ENCODE measurements at regions of chr12 and their contacts with region 1.

Region 1: DNA sequence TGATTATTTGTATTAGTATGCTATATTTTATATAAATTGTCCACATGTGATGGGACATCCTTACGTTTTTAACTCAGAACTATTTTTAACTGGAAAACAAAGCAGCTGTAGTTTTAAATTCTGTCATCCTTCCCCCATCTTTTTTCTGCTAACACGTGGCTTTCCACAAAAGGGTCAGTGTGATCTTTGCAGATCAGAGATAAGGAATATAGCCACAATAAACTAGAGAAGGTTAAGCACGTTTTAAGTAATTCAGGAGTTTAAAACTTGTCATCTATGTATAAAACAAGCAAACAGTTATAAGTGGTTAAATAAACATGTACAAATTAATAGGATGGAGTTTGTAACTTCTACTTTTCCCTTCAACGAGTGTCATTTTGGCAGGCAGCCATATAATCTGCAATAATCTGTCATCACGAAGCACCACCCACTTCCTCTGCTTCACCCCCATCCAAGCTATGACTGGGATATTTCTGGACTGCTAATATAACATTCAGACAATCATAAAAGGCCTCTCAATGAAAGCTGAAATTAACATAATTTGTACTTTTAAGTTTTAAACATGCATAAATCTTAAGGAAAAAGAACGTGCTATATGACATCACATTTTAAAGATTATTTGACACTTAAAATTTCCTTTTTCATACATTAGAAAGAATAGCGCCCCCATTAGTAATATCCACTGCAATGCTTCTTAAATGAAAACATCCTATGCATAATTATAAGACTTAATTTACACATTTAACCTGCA is 15.3 kb downstream of the TAOK3 start:
- DNase-seq: peak; percentile 76
- ATAC-seq: peak; percentile 50
- H3K4me3 ChIP-seq: peak overlapping the region in 4 of 5 experiments; percentile 15 to 92 (median 48)
- H3K4me3 Mint-ChIP-seq: peak overlapping the region; percentile 93
- H3K27ac ChIP-seq: peak overlapping the region; percentile 43 to 87
- H3K27ac Mint-ChIP-seq: peak overlapping the region; percentile 69
- H3K4me1 ChIP-seq: peaks cover 23 to 38% of the 10 kb centered on the region in 2 donors
- H3K4me1 Mint-ChIP-seq: peaks cover 42% of the 10 kb centered on the region
- H3K27me3 ChIP-seq: no peaks in the 10 kb centered on the region
- H3K27me3 Mint-ChIP-seq: no peaks in the 10 kb centered on the region
- CTCF ChIP-seq: peak; percentile 33

Region 2: DNA sequence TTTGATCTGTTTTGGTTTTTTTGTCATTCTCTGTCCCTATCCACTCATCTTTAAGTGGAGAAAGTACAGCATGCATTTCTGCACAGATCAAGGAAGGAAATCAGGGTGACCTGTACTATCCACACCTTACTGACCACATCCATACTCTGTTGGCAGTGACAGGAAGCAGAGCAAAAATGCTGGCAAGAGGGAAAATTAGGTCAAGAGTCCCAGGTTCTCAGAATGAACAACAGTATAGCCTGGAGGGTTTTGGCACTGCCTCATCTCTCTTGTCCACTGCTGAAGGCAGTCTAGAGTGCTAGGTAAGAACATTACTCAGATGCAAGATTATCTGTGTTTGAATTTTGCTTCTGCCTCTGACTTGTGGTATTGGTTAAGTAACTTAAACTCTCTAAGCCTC is 55.4 kb before region 1 on chr12:
- CTCF ChIA-PET with region 1: interaction called, 4 read pairs
- POLR2A ChIA-PET with region 1: interaction called, 3 read pairs
- intact Hi-C with region 1: loop called (anchors 5 kb)
- DNase-seq: no peak
- ATAC-seq: no peak
- H3K4me3 ChIP-seq: no peak overlapping the region
- H3K4me3 Mint-ChIP-seq: no peak overlapping the region
- H3K27ac ChIP-seq: no peak overlapping the region
- H3K27ac Mint-ChIP-seq: no peak overlapping the region
- H3K4me1 ChIP-seq: peaks cover 14 to 15% of the 10 kb centered on the region in 2 donors
- H3K4me1 Mint-ChIP-seq: peaks cover 39% of the 10 kb centered on the region
- H3K27me3 ChIP-seq: no peaks in the 10 kb centered on the region
- H3K27me3 Mint-ChIP-seq: no peaks in the 10 kb centered on the region
- CTCF ChIP-seq: no peak

Region 3: DNA sequence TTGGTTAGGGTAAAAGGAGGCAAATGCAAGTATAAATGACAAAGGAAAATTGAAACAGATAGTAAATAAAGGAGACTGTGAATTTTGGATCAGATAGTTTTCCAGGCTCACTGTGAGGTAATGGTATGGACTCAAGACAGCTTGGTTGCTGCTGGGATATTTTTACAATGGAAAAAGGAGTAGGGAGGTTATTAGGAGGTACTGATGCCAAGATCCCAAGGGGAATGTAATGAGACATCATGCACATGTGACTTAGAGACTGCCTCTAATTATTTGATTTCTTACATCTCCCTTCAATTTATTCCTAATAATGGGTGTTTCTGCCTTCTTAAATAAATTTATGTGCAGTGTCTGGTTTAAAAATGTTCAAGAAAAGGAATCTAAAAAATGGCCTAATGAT is 41.6 kb before region 1 on chr12:
- CTCF ChIA-PET with region 1: interaction called, 3 read pairs
- POLR2A ChIA-PET with region 1: no interaction called
- intact Hi-C with region 1: loop called (anchors 5 kb)
- DNase-seq: no peak
- ATAC-seq: no peak
- H3K4me3 ChIP-seq: no peak overlapping the region
- H3K4me3 Mint-ChIP-seq: no peak overlapping the region
- H3K27ac ChIP-seq: no peak overlapping the region
- H3K27ac Mint-ChIP-seq: no peak overlapping the region
- H3K4me1 ChIP-seq: peaks cover 5 to 17% of the 10 kb centered on the region in 2 donors
- H3K4me1 Mint-ChIP-seq: peaks cover 35% of the 10 kb centered on the region
- H3K27me3 ChIP-seq: no peaks in the 10 kb centered on the region
- H3K27me3 Mint-ChIP-seq: no peaks in the 10 kb centered on the region
- CTCF ChIP-seq: no peak

Region 4: DNA sequence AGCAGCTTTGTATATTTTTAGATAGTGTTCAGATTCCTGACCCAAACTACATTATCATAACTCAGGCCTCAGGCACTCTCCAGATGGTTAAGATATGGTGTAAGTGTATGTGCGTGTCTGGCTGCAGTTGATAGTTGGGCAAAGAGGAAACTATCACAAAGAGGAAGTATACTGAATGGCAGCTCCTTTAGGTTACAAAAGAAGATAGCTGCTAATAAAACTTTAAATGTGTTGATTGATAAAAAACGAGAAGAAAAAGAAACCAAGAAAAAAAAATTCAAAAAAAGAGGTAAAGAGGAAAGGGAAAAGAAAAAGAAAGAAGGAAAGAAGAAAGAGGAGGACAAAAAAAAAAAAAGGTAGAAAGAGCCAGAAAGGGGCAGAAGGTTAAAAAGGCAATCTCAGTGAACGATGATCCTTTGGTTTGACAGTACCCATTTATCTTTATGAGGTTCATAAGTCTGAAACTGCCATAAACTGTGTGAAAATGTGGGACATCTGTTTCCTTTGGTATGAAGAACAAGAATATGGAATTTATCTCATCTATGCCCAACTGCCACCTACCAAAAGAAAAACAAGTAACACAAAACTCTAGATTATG is 26.9 kb before region 1 on chr12:
- CTCF ChIA-PET with region 1: interaction called, 3 read pairs
- POLR2A ChIA-PET with region 1: interaction called, 15 read pairs
- intact Hi-C with region 1: no loop called
- DNase-seq: peak; percentile 70
- ATAC-seq: peak; percentile 91
- H3K4me3 ChIP-seq: peak overlapping the region in 1 of 5 experiments; percentile 33
- H3K4me3 Mint-ChIP-seq: peak overlapping the region; percentile 42
- H3K27ac ChIP-seq: peak overlapping the region; percentile 7 to 83
- H3K27ac Mint-ChIP-seq: peak overlapping the region; percentile 80
- H3K4me1 ChIP-seq: peaks cover 21 to 41% of the 10 kb centered on the region in 2 donors
- H3K4me1 Mint-ChIP-seq: peaks cover 54% of the 10 kb centered on the region
- H3K27me3 ChIP-seq: no peaks in the 10 kb centered on the region
- H3K27me3 Mint-ChIP-seq: no peaks in the 10 kb centered on the region
- CTCF ChIP-seq: no peak

Region 5: GRCh38 chr12:118346895-118347294 is 10.5 kb before region 1 on chr12:
- CTCF ChIA-PET with region 1: interaction called, 13 read pairs
- POLR2A ChIA-PET with region 1: interaction called, 9 read pairs
- intact Hi-C with region 1: loop called (anchors 1 kb)
- DNase-seq: peak; percentile 68
- ATAC-seq: peak; percentile 80
- H3K4me3 ChIP-seq: no peak overlapping the region
- H3K4me3 Mint-ChIP-seq: peak overlapping the region; percentile 59
- H3K27ac ChIP-seq: peak overlapping the region; percentile 28 to 76
- H3K27ac Mint-ChIP-seq: peak overlapping the region; percentile 73
- H3K4me1 ChIP-seq: peaks cover 21 to 32% of the 10 kb centered on the region in 2 donors
- H3K4me1 Mint-ChIP-seq: peaks cover 51% of the 10 kb centered on the region
- H3K27me3 ChIP-seq: no peaks in the 10 kb centered on the region
- H3K27me3 Mint-ChIP-seq: no peaks in the 10 kb centered on the region
- CTCF ChIP-seq: no peak

Region 6: DNA sequence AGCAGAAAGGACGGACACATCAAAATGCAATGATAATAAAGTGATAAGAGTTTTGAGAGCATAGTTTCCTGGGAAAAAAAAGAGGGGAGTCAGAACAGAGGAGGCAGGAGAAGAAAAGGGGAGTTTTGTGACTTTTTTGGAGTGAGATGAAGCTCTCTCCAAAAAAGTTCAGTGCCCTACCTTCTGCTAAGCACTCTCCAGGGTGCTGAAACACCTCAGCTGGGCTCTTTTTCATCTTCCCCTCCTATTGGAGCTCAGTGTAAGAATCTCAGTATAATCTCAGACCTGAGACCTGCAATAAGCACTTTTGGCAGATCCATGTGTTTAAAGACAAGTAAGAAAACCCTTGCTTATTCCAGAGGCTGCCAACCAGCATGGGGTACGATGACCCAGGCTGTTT is 565.0 kb after region 1 on chr12:
- CTCF ChIA-PET with region 1: no interaction called
- POLR2A ChIA-PET with region 1: no interaction called
- intact Hi-C with region 1: no loop called
- DNase-seq: no peak
- ATAC-seq: no peak
- H3K4me3 ChIP-seq: no peak overlapping the region
- H3K4me3 Mint-ChIP-seq: no peak overlapping the region
- H3K27ac ChIP-seq: no peak overlapping the region
- H3K27ac Mint-ChIP-seq: no peak overlapping the region
- H3K4me1 ChIP-seq: no peaks in the 10 kb centered on the region
- H3K4me1 Mint-ChIP-seq: no peaks in the 10 kb centered on the region
- H3K27me3 ChIP-seq: no peaks in the 10 kb centered on the region
- H3K27me3 Mint-ChIP-seq: peaks cover 9% of the 10 kb centered on the region
- CTCF ChIP-seq: no peak